ENCODE measurements at regions of chr19 and their contacts with region 1.

Region 1: DNA sequence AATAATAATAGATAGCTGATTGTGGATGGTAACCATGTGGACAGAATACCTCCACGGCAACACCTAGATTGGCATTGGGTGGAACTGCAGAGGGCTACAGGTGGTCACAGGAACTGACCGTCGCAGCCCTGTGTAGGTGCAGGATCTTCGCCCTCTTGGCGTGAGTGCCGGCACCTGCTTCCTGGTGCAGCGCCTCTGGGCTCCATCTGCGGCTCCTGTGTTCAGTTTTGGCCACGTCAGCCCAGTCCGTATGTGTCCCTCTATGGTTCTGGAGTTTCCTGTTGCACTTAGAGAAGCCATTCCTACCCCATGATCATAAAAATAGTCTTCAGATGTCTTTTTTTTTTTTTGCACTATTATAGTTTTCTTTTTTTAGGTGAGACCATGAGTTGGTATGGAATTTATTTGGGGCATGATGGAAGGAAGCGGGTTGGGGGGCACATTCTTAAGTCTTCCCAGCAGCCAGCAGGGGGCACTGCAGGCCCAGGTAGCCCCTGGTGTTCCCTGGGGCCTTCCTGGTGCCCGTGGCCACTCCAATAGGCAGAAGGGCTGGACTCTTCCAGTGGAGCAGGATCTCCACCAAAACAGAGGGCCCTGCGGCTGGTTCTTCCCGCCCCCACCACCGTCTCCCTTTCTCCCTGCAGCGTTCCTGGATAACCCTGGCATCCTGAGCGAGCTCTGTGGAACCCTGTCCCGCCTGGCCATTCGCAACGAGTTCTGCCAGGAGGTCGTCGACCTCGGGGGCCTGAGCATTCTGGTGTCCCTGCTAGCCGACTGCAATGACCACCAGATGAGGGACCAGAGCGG is 10.1 kb upstream of the SLC25A42 start:
- DNase-seq: peak; percentile 70 to 81
- H3K4me3 ChIP-seq: no peak overlapping the region
- H3K27ac ChIP-seq: no peak overlapping the region
- H3K4me1 ChIP-seq: no peaks in the 10 kb centered on the region
- H3K27me3 ChIP-seq: no peaks in the 10 kb centered on the region
- CTCF ChIP-seq: peak in 5 of 7 experiments; percentile 44 to 74 (median 70)
- EP300 ChIP-seq: no peak
- POLR2A ChIP-seq: no peak

Region 2: DNA sequence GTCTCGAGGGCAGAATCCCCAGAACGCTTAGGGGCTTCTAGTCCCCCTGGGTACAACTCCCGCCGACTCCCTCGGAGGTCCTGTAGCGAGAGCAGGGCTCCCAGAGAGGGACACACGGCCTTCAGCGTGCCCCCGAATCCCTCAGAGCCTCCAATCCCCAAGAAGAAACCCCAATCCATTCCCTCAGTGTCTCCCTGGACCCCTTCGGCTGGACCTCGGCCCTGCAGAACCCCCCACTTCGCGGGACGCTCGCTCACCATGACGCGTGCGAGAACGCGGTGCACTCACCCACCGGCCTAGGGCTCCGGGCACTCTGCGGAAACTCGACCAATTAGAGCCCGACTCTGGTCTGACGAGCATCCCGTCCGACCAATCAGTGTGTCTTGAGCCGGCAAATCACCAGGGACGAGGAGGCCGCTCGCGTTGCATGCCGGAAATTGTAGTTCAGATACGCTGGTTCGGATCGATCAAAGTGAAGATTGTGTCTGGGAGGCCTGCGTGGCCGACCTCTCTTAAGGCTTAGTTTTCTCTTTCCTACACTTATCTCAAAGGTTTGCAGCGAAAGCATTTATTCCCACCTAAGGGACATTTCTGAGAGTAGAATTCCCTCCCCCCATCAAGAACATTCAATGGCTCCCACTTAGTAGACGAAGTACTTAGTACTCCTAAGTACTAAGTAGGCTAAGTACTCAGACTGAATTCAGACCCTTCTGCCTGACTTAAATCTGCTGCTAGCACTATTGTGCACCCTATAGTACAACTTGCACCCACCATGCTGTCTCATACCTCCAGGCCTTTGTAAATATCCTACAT is 84.7 kb after region 1 on chr19 and contains the start of gene TMEM161A:
- intact Hi-C with region 1: loop called (anchors 10 kb)
- DNase-seq: peak; percentile 99
- H3K4me3 ChIP-seq: peak within 1 kb of the TSS; percentile 60 to 84 (median 69)
- H3K27ac ChIP-seq: peak within 1 kb of the TSS; percentile 48 to 86 (median 82)
- H3K4me1 ChIP-seq: peaks cover 7 to 28% (median 20%) of the 10 kb centered on the region in 4 donors
- H3K27me3 ChIP-seq: no peaks in the 10 kb centered on the region
- CTCF ChIP-seq: no peak
- EP300 ChIP-seq: no peak
- POLR2A ChIP-seq: no peak
- total RNA-seq, gene TMEM161A: 6.4 to 59.5 (median 15.9) TPM

Measured in stomach (tissue), 19 donors.